ENCODE measurements at regions of chr12 and their contacts with region 1.

Region 1: GRCh38 chr12:92363295-92364146 is 217.9 kb upstream of the BTG1 start:
- DNase-seq: peak; percentile 10 to 75 (median 61)
- ATAC-seq: peak; percentile 70
- H3K4me3 ChIP-seq: peak overlapping the region; percentile 27 to 39
- H3K4me3 Mint-ChIP-seq: peak overlapping the region; percentile 71
- H3K27ac ChIP-seq: peak overlapping the region; percentile 52 to 75
- H3K27ac Mint-ChIP-seq: peak overlapping the region; percentile 95
- H3K4me1 ChIP-seq: peaks cover 58% of the 10 kb centered on the region
- H3K4me1 Mint-ChIP-seq: peaks cover 71% of the 10 kb centered on the region
- H3K27me3 ChIP-seq: no peaks in the 10 kb centered on the region
- H3K27me3 Mint-ChIP-seq: no peaks in the 10 kb centered on the region
- CTCF ChIP-seq: no peak

Region 2: GRCh38 chr12:92378682-92379479 is 15.4 kb after region 1 on chr12:
- CTCF ChIA-PET with region 1: interaction called, 7 read pairs
- POLR2A ChIA-PET with region 1: interaction called, 9 read pairs
- intact Hi-C with region 1: loop called in 1 of 2 experiments (anchors 2 kb)
- DNase-seq: peak in 4 of 9 experiments; percentile 15 to 51 (median 38)
- ATAC-seq: peak; percentile 93
- H3K4me3 ChIP-seq: no peak overlapping the region
- H3K4me3 Mint-ChIP-seq: peak overlapping the region; percentile 9
- H3K27ac ChIP-seq: peak overlapping the region in 1 of 2 experiments; percentile 44
- H3K27ac Mint-ChIP-seq: peak overlapping the region; percentile 85
- H3K4me1 ChIP-seq: peaks cover 44% of the 10 kb centered on the region
- H3K4me1 Mint-ChIP-seq: peaks cover 59% of the 10 kb centered on the region
- H3K27me3 ChIP-seq: no peaks in the 10 kb centered on the region
- H3K27me3 Mint-ChIP-seq: no peaks in the 10 kb centered on the region
- CTCF ChIP-seq: no peak

Region 3: GRCh38 chr12:92396647-92397252 is 33.2 kb after region 1 on chr12:
- CTCF ChIA-PET with region 1: interaction called, 12 read pairs
- POLR2A ChIA-PET with region 1: interaction called, 11 read pairs
- intact Hi-C with region 1: loop called (anchors 2 kb)
- DNase-seq: no peak
- ATAC-seq: no peak
- H3K4me3 ChIP-seq: no peak overlapping the region
- H3K4me3 Mint-ChIP-seq: peak overlapping the region; percentile 4
- H3K27ac ChIP-seq: peak overlapping the region; percentile 2 to 46
- H3K27ac Mint-ChIP-seq: peak overlapping the region; percentile 95
- H3K4me1 ChIP-seq: peaks cover 88% of the 10 kb centered on the region
- H3K4me1 Mint-ChIP-seq: peaks cover 93% of the 10 kb centered on the region
- H3K27me3 ChIP-seq: no peaks in the 10 kb centered on the region
- H3K27me3 Mint-ChIP-seq: no peaks in the 10 kb centered on the region
- CTCF ChIP-seq: no peak

Region 4: DNA sequence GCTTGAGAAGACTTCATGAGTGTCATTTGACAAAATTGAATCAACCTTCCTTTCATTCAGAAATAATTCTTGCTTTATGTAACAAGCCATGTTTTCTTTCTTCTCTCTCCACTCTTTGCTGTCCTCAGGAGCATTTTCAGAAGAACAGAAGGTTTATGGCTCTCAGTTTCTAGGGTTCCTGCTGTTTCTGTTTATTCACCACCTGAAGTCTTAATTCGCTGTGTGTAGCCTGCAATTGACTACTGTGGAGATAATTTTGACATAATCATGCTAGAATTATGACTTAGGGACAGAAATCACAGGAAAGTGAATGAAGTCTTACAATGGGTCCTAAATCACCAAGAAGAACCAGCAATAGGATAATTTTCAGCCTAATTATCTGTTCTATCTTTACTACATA is 332.1 kb after region 1 on chr12:
- CTCF ChIA-PET with region 1: no interaction called
- POLR2A ChIA-PET with region 1: no interaction called
- intact Hi-C with region 1: no loop called
- DNase-seq: no peak
- ATAC-seq: no peak
- H3K4me3 ChIP-seq: no peak overlapping the region
- H3K4me3 Mint-ChIP-seq: no peak overlapping the region
- H3K27ac ChIP-seq: no peak overlapping the region
- H3K27ac Mint-ChIP-seq: no peak overlapping the region
- H3K4me1 ChIP-seq: no peaks in the 10 kb centered on the region
- H3K4me1 Mint-ChIP-seq: no peaks in the 10 kb centered on the region
- H3K27me3 ChIP-seq: no peaks in the 10 kb centered on the region
- H3K27me3 Mint-ChIP-seq: no peaks in the 10 kb centered on the region
- CTCF ChIP-seq: no peak